Natural killer cell (primary cell): ENCODE measurements at regions of chr7 and their contacts with region 1.

Region 1: DNA sequence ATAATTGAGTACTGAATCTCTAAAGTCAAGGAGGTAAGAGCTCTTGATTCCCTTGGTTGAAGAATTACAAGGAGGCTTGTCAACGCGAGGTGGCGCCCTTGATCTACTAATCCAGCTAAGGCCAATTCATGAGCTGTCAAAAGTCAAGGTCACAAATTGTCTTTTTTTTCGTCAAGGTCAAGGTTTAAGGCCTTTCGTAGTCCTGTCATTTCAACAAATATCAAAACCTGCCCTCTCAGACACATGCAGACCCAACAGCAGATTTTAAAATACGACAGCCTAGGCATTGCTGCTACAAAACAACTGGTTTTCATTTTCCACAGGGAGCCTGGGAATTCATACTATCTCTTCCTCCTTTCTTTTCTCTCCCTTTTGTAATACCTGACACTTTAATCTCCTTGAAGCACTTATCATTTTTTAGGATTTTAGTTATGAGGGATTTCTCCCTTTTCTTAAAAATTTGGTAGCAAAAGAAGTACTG is 3.6 kb downstream of the HOXA13 start:
- DNase-seq: peak; percentile 73 to 89
- ATAC-seq: peak in 2 of 3 donors; percentile 36 to 38
- H3K4me3 ChIP-seq: no peak overlapping the region
- H3K4me3 Mint-ChIP-seq: peak overlapping the region; percentile 26
- H3K27ac ChIP-seq: no peak overlapping the region
- H3K27ac Mint-ChIP-seq: no peak overlapping the region
- H3K4me1 ChIP-seq: peaks cover 41% of the 10 kb centered on the region
- H3K4me1 Mint-ChIP-seq: peaks cover 28 to 32% of the 10 kb centered on the region in 2 donors
- H3K27me3 ChIP-seq: peaks cover 85% of the 10 kb centered on the region
- H3K27me3 Mint-ChIP-seq: peaks cover 71 to 79% of the 10 kb centered on the region in 2 donors
- CTCF ChIP-seq: peak; percentile 92

Region 2: GRCh38 chr7:27242555-27243339 is 46.4 kb after region 1 on chr7 and contains the start of gene EVX1:
- intact Hi-C with region 1: loop called (anchors 5 kb)
- DNase-seq: peak in 1 of 2 donors; percentile 60
- ATAC-seq: peak in 1 of 3 donors; percentile 56
- H3K4me3 ChIP-seq: no peak within 1 kb of the TSS
- H3K4me3 Mint-ChIP-seq: no peak within 1 kb of the TSS
- H3K27ac ChIP-seq: no peak within 1 kb of the TSS
- H3K27ac Mint-ChIP-seq: peak within 1 kb of the TSS in 1 of 2 donors; percentile 13
- H3K4me1 ChIP-seq: peaks cover 21% of the 10 kb centered on the region
- H3K4me1 Mint-ChIP-seq: peaks cover 0 to 5% of the 10 kb centered on the region in 2 donors
- H3K27me3 ChIP-seq: peaks cover 76% of the 10 kb centered on the region
- H3K27me3 Mint-ChIP-seq: peaks cover 67 to 73% of the 10 kb centered on the region in 2 donors
- CTCF ChIP-seq: no peak
- total RNA-seq, gene EVX1: not detected

Region 3: DNA sequence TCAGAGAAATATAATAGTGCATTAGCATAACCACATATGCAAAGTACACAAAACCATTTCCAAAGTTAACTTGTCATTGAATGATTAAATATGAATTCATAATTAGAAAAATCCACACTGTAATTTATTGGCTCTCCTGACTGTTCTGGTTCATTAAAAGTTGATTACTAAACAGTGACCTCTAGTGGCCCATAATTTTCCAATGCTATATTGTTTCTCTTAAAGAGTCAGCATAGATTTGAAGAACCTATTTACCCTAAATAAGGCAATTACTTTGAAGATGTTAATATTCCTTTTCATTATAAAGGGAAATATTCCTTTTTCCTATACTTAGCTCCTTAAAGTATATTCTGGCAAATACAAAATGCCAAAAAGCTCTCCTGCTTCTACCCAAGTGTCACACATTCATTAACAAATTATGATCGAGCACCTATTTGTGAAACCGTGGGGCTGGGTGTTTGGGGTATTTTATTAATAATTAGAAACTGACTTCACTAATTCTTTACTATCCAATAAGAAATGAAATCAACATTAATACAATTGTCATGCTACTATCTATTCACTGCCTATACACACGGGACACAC is 380.1 kb after region 1 on chr7:
- intact Hi-C with region 1: loop called (anchors 1 kb)
- DNase-seq: peak in 1 of 2 donors; percentile 53
- ATAC-seq: peak; percentile 44 to 69 (median 64)
- H3K4me3 ChIP-seq: no peak overlapping the region
- H3K4me3 Mint-ChIP-seq: no peak overlapping the region
- H3K27ac ChIP-seq: no peak overlapping the region
- H3K27ac Mint-ChIP-seq: no peak overlapping the region
- H3K4me1 ChIP-seq: no peaks in the 10 kb centered on the region
- H3K4me1 Mint-ChIP-seq: no peaks in the 10 kb centered on the region
- H3K27me3 ChIP-seq: no peaks in the 10 kb centered on the region
- H3K27me3 Mint-ChIP-seq: no peaks in the 10 kb centered on the region
- CTCF ChIP-seq: peak; percentile 72

Region 4: GRCh38 chr7:27784393-27785053 is 588.2 kb after region 1 on chr7:
- intact Hi-C with region 1: loop called (anchors 1 kb)
- DNase-seq: peak in 1 of 2 donors; percentile 70
- ATAC-seq: peak; percentile 54 to 90 (median 66)
- H3K4me3 ChIP-seq: no peak overlapping the region
- H3K4me3 Mint-ChIP-seq: no peak overlapping the region
- H3K27ac ChIP-seq: no peak overlapping the region
- H3K27ac Mint-ChIP-seq: no peak overlapping the region
- H3K4me1 ChIP-seq: no peaks in the 10 kb centered on the region
- H3K4me1 Mint-ChIP-seq: peaks cover 8 to 10% of the 10 kb centered on the region in 2 donors
- H3K27me3 ChIP-seq: no peaks in the 10 kb centered on the region
- H3K27me3 Mint-ChIP-seq: no peaks in the 10 kb centered on the region
- CTCF ChIP-seq: peak; percentile 81

Region 5: GRCh38 chr7:27921081-27921836 is 724.9 kb after region 1 on chr7:
- intact Hi-C with region 1: loop called (anchors 1 kb)
- DNase-seq: peak in 1 of 2 donors; percentile 61
- ATAC-seq: peak; percentile 30 to 77 (median 68)
- H3K4me3 ChIP-seq: no peak overlapping the region
- H3K4me3 Mint-ChIP-seq: no peak overlapping the region
- H3K27ac ChIP-seq: no peak overlapping the region
- H3K27ac Mint-ChIP-seq: peak overlapping the region in 1 of 2 donors; percentile 46
- H3K4me1 ChIP-seq: no peaks in the 10 kb centered on the region
- H3K4me1 Mint-ChIP-seq: peaks cover 44 to 49% of the 10 kb centered on the region in 2 donors
- H3K27me3 ChIP-seq: no peaks in the 10 kb centered on the region
- H3K27me3 Mint-ChIP-seq: no peaks in the 10 kb centered on the region
- CTCF ChIP-seq: no peak

Region 6: DNA sequence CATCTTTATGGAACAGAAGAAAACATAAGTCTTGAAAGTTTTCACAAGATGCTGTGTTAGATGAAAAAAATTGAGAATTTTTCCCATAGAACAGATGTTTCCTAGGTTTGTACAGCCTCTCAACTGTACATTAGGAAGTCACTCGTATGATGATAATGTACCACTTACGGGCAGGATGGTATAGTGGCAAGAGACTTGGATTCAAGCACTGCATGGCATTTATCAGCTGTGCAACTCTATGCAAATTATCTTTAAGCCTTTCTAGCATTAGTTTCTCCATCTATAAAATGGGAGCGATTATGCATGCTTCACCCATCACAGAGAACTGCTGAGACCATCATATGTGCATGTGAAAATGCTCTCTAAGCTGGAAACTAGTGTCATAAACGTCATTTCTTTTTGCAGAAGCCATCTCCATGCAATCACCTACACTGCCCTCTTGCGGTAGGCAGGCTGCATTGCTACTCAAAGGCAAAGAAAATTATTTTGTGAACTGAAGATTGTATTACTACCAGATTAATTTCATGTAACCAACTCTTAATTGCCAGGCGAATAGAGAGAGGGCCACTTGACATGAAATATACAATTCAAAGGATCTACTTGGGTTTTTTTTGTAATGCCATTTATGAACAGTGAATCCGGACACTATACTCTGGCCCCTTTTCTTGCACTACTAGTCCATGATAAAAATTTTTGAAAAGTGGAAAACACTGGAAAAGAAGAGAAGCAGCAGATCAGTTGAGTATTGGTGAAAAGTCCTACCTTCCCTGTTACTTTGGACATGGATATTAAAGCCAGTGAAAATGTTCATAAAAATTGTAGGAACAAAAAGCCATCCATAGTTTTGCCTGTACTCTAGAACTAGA is 881.9 kb after region 1 on chr7:
- intact Hi-C with region 1: loop called (anchors 5 kb)
- DNase-seq: peak in 1 of 2 donors; percentile 75
- ATAC-seq: peak; percentile 86 to 97 (median 88)
- H3K4me3 ChIP-seq: no peak overlapping the region
- H3K4me3 Mint-ChIP-seq: no peak overlapping the region
- H3K27ac ChIP-seq: no peak overlapping the region
- H3K27ac Mint-ChIP-seq: peak overlapping the region in 1 of 2 donors; percentile 20
- H3K4me1 ChIP-seq: peaks cover 18% of the 10 kb centered on the region
- H3K4me1 Mint-ChIP-seq: peaks cover 70 to 74% of the 10 kb centered on the region in 2 donors
- H3K27me3 ChIP-seq: no peaks in the 10 kb centered on the region
- H3K27me3 Mint-ChIP-seq: no peaks in the 10 kb centered on the region
- CTCF ChIP-seq: peak; percentile 97

Region 7: GRCh38 chr7:28096713-28097112 is 900.4 kb after region 1 on chr7:
- intact Hi-C with region 1: loop called (anchors 5 kb)
- DNase-seq: peak; percentile 23 to 77
- ATAC-seq: peak; percentile 74 to 78 (median 77)
- H3K4me3 ChIP-seq: no peak overlapping the region
- H3K4me3 Mint-ChIP-seq: no peak overlapping the region
- H3K27ac ChIP-seq: no peak overlapping the region
- H3K27ac Mint-ChIP-seq: peak overlapping the region; percentile 26 to 64
- H3K4me1 ChIP-seq: peaks cover 3% of the 10 kb centered on the region
- H3K4me1 Mint-ChIP-seq: peaks cover 36 to 45% of the 10 kb centered on the region in 2 donors
- H3K27me3 ChIP-seq: no peaks in the 10 kb centered on the region
- H3K27me3 Mint-ChIP-seq: no peaks in the 10 kb centered on the region
- CTCF ChIP-seq: peak; percentile 96